ENCODE measurements at regions of chr15 and their contacts with region 1.

Region 1: GRCh38 chr15:49421991-49422390 is 1.1 kb upstream of the FGF7 start:
- DNase-seq: peak; percentile 35
- H3K4me3 Mint-ChIP-seq: peak overlapping the region; percentile 35
- H3K27ac Mint-ChIP-seq: no peak overlapping the region
- H3K4me1 Mint-ChIP-seq: no peaks in the 10 kb centered on the region
- H3K27me3 Mint-ChIP-seq: peaks cover 14% of the 10 kb centered on the region

Region 2: GRCh38 chr15:49235446-49236124 is 186.4 kb before region 1 on chr15:
- CTCF ChIA-PET with region 1: interaction called, 61 read pairs
- POLR2A ChIA-PET with region 1: interaction called, 4 read pairs
- DNase-seq: peak; percentile 62
- H3K4me3 Mint-ChIP-seq: no peak overlapping the region
- H3K27ac Mint-ChIP-seq: peak overlapping the region; percentile 53
- H3K4me1 Mint-ChIP-seq: peaks cover 25% of the 10 kb centered on the region
- H3K27me3 Mint-ChIP-seq: no peaks in the 10 kb centered on the region